ENCODE measurements at regions of chr20 and their contacts with region 1.

Region 1: GRCh38 chr20:58839474-58839874 is 11.2 kb downstream of the GNAS-AS1 start:
- DNase-seq: peak; percentile 75
- ATAC-seq: peak; percentile 58
- H3K4me3 Mint-ChIP-seq: no peak overlapping the region
- H3K27ac Mint-ChIP-seq: no peak overlapping the region
- H3K4me1 Mint-ChIP-seq: peaks cover 8% of the 10 kb centered on the region
- H3K27me3 Mint-ChIP-seq: peaks cover 44% of the 10 kb centered on the region

Region 2: GRCh38 chr20:58515233-58516184 is 324.0 kb before region 1 on chr20 and contains the start of gene APCDD1L:
- CTCF ChIA-PET with region 1: no interaction called
- POLR2A ChIA-PET with region 1: no interaction called
- intact Hi-C with region 1: no loop called
- DNase-seq: peak; percentile 18
- ATAC-seq: no peak
- H3K4me3 Mint-ChIP-seq: no peak within 1 kb of the TSS
- H3K27ac Mint-ChIP-seq: no peak within 1 kb of the TSS
- H3K4me1 Mint-ChIP-seq: no peaks in the 10 kb centered on the region
- H3K27me3 Mint-ChIP-seq: peaks cover 30% of the 10 kb centered on the region
- total RNA-seq, gene APCDD1L: not detected

Region 3: GRCh38 chr20:59258221-59258621 is 418.7 kb after region 1 on chr20:
- CTCF ChIA-PET with region 1: no interaction called
- POLR2A ChIA-PET with region 1: interaction called, 12 read pairs
- intact Hi-C with region 1: no loop called
- DNase-seq: no peak
- ATAC-seq: peak; percentile 72
- H3K4me3 Mint-ChIP-seq: no peak overlapping the region
- H3K27ac Mint-ChIP-seq: peak overlapping the region; percentile 71
- H3K4me1 Mint-ChIP-seq: peaks cover 53% of the 10 kb centered on the region
- H3K27me3 Mint-ChIP-seq: no peaks in the 10 kb centered on the region